PC-3 (cell line): ENCODE measurements at regions of chr16 and their contacts with region 1.

Region 1: GRCh38 chr16:20900299-20901067 is at the starts of genes DCUN1D3 and LYRM1:
- DNase-seq: peak; percentile 92
- ATAC-seq: peak; percentile 77
- H3K4me3 ChIP-seq: peak within 1 kb of the TSS; percentile 96
- H3K27ac ChIP-seq: peak within 1 kb of the TSS; percentile 97
- H3K4me1 ChIP-seq: peaks cover 66% of the 10 kb centered on the region
- H3K27me3 ChIP-seq: no peaks in the 10 kb centered on the region
- CTCF ChIP-seq: no peak
- total RNA-seq, gene DCUN1D3: 8.5 and 10.5 TPM in 2 replicates
- total RNA-seq, gene LYRM1: 21.9 and 35.1 TPM in 2 replicates

Region 2: DNA sequence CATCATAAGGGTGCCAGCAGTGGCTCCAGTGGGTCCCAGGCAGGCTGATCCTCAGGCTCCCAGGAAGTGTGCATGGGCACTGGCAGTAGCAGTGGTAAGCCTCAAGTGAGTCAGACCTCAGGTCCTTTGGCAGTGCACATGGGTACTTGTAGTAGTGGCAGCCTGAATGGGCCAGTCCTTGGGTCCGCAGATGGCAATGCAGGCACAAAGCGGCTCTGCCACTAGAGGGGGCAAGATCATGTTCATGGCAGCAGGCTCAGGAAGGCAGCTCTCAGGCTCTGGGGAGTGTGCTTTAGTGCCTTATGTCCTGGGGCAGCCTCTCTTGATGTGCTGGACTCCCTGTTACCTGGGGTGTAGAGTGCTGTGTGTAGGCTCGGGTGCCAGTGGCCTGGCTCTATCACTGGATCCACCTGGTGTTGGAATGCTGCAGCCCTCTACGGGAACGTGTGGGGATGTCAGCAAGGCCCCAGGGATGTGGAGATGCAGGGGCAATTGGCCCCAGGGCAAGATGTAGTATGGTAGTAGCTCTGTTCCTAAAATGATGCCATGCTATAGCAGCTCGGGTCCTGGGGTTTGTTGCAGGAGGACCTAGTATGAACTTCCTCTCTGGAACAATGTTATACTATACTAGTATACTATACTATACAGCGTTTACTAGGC is 125.7 kb before region 1 on chr16:
- CTCF ChIA-PET with region 1: no interaction called
- POLR2A ChIA-PET with region 1: interaction called, 10 read pairs
- intact Hi-C with region 1: no loop called
- DNase-seq: peak; percentile 83
- ATAC-seq: peak; percentile 99
- H3K4me3 ChIP-seq: no peak overlapping the region
- H3K27ac ChIP-seq: no peak overlapping the region
- H3K4me1 ChIP-seq: no peaks in the 10 kb centered on the region
- H3K27me3 ChIP-seq: no peaks in the 10 kb centered on the region
- CTCF ChIP-seq: peak; percentile 80

Region 3: DNA sequence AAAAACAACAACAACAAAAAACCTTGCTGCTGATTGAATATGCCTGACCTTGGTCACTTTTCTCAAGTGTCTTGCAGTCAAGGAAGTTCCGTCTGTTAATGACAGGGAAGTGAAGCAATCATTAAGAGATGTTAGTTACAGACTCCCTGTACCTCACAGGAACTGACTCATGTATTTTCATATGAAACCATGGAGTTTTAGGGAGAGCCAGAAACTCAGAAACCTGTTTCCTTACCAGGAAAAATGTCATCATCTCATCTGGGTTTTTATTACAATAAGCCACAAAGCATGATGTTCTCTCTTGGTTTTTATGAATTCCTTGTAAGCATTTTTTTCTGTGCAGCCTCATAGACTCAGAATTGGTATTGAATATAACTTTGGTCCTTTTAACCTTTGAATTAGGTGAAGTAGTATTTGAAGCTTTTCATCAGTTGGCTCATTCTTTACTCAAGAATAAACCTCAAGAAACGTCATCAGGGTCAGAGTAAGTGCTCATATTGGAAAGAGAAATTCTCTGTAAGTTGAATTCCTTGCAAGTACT is 10.4 kb after region 1 on chr16:
- CTCF ChIA-PET with region 1: interaction called, 3 read pairs
- POLR2A ChIA-PET with region 1: interaction called, 5 read pairs
- intact Hi-C with region 1: loop called (anchors 1 kb)
- DNase-seq: peak; percentile 91
- ATAC-seq: peak; percentile 70
- H3K4me3 ChIP-seq: peak overlapping the region; percentile 18; the same call in 1 of the 2 replicates
- H3K27ac ChIP-seq: peak overlapping the region; percentile 99
- H3K4me1 ChIP-seq: peaks cover 73% of the 10 kb centered on the region
- H3K27me3 ChIP-seq: no peaks in the 10 kb centered on the region
- CTCF ChIP-seq: no peak

Region 4: DNA sequence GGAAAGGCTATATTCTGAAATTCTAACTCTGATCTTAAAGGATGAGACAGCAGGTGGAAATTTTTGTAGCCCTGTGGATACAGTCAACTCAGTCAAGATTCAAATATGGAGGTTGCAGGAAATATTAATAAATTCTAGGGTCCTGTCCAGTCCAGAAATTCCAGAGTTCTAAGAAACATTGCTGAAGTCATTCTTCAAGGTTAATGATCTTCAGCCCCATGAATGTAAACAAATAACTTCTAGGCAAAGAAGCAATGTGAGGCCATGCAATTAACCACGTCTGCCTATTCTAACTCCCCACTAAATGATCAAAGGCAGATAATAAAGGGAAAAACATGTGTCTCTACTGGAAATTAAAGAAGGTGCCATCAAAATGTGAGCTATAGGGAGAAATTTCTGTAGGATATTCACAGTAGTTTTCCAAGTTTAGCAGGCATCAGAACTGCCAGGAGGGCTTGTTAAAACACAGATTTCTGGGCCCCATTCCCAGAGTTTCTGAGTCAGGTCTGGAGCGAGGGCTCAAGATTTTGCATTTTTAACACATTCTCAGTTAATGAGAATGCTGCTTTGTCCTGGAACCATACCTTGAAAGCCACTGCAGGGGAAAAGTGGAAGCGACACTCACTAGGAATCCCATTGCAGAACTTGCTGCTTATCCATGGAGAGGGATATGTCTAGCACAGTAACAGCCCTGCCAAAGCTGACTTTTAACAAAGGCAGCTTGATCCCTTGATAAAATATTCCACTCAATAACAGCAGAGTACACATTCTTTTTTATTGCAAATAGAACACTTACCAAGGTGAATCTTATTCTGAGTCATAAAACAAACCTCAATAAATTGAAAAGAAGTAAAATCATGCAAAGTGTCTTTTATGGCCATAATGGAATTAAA is 188.4 kb after region 1 on chr16:
- CTCF ChIA-PET with region 1: no interaction called
- POLR2A ChIA-PET with region 1: no interaction called
- intact Hi-C with region 1: loop called (anchors 5 kb)
- DNase-seq: peak; percentile 52
- ATAC-seq: peak; percentile 95
- H3K4me3 ChIP-seq: no peak overlapping the region; the same call in 1 of the 2 replicates
- H3K27ac ChIP-seq: peak overlapping the region; percentile 42
- H3K4me1 ChIP-seq: peaks cover 11% of the 10 kb centered on the region
- H3K27me3 ChIP-seq: no peaks in the 10 kb centered on the region
- CTCF ChIP-seq: no peak